Transverse colon (tissue), 4 donors: ENCODE measurements at regions of chr1 and their contacts with region 1.

Region 1: GRCh38 chr1:86704458-86704971 is at the start of gene SH3GLB1:
- DNase-seq: peak; percentile 93
- H3K4me3 ChIP-seq: peak within 1 kb of the TSS; percentile 61 to 87 (median 78)
- H3K27ac ChIP-seq: peak within 1 kb of the TSS; percentile 92 to 100 (median 98)
- H3K4me1 ChIP-seq: peaks cover 7 to 46% (median 22%) of the 10 kb centered on the region in 4 donors
- H3K27me3 ChIP-seq: no peaks in the 10 kb centered on the region
- CTCF ChIP-seq: peak; percentile 92 to 97 (median 94)
- EP300 ChIP-seq: no peak
- POLR2A ChIP-seq: peak; percentile 86
- total RNA-seq, gene SH3GLB1: 52.5 to 75.1 (median 63.4) TPM

Region 2: DNA sequence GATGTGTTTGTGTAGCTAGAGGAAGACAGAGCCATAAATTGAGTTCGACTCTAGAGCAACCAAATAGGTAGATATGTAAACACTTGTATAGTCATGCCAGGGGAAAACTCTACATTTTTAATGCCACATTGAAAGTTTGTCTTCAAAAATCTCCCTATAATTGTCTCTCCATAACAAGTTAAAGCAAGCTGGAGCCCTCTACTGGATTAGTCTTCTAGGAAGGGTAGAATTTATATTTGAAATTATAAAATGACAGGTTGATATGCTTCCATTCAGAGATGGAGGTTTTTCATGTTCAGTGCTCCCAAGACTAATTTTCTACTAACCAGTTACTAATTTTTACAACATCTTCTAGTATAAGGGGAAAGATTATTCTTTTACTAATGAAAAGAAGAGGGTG is 534.9 kb before region 1 on chr1:
- in situ Hi-C with region 1: no loop called
- intact Hi-C with region 1: no loop called
- DNase-seq: no peak
- H3K4me3 ChIP-seq: no peak overlapping the region
- H3K27ac ChIP-seq: no peak overlapping the region
- H3K4me1 ChIP-seq: no peaks in the 10 kb centered on the region
- H3K27me3 ChIP-seq: no peaks in the 10 kb centered on the region
- CTCF ChIP-seq: no peak
- EP300 ChIP-seq: no peak
- POLR2A ChIP-seq: no peak

Region 3: GRCh38 chr1:86913896-86914634 is 209.6 kb after region 1 on chr1 and contains the start of gene SELENOF:
- in situ Hi-C with region 1: loop called in 1 of 4 experiments (anchors 25 kb)
- intact Hi-C with region 1: no loop called
- DNase-seq: peak; percentile 99
- H3K4me3 ChIP-seq: peak within 1 kb of the TSS; percentile 77 to 100 (median 96)
- H3K27ac ChIP-seq: peak within 1 kb of the TSS; percentile 89 to 96 (median 92)
- H3K4me1 ChIP-seq: peaks cover 12 to 34% (median 21%) of the 10 kb centered on the region in 4 donors
- H3K27me3 ChIP-seq: no peaks in the 10 kb centered on the region
- CTCF ChIP-seq: no peak
- EP300 ChIP-seq: no peak
- POLR2A ChIP-seq: peak; percentile 46
- total RNA-seq, gene SELENOF: 32.0 to 130 (median 77.9) TPM